Gastrocnemius medialis (tissue), 4 donors: ENCODE measurements at regions of chr16 and their contacts with region 1.

Region 1: GRCh38 chr16:22190776-22191531 is 15.1 kb upstream of the EEF2K start:
- DNase-seq: peak; percentile 100
- ATAC-seq: peak; percentile 64 to 65
- H3K4me3 ChIP-seq: peak overlapping the region; percentile 53 to 73 (median 62)
- H3K27ac ChIP-seq: peak overlapping the region; percentile 89 to 98 (median 97)
- H3K4me1 ChIP-seq: peaks cover 19 to 21% of the 10 kb centered on the region in 2 donors
- H3K27me3 ChIP-seq: no peaks in the 10 kb centered on the region
- CTCF ChIP-seq: no peak
- POLR2A ChIP-seq: peak; percentile 88 to 94

Region 2: GRCh38 chr16:20900299-20901067 is 1290.5 kb before region 1 on chr16 and contains the starts of genes DCUN1D3 and LYRM1:
- in situ Hi-C with region 1: loop called in 1 of 4 experiments (anchors 10 kb)
- intact Hi-C with region 1: loop called (anchors 5 kb)
- DNase-seq: peak; percentile 96 to 97
- ATAC-seq: peak; percentile 95 to 97
- H3K4me3 ChIP-seq: peak within 1 kb of the TSS; percentile 81 to 94 (median 86)
- H3K27ac ChIP-seq: peak within 1 kb of the TSS; percentile 93 to 97 (median 94)
- H3K4me1 ChIP-seq: peaks cover 24 to 62% of the 10 kb centered on the region in 2 donors
- H3K27me3 ChIP-seq: no peaks in the 10 kb centered on the region
- CTCF ChIP-seq: no peak
- POLR2A ChIP-seq: peak; percentile 69 to 77
- total RNA-seq, gene DCUN1D3: 7.6 to 10.5 (median 8.3) TPM
- total RNA-seq, gene LYRM1: 36.4 to 74.7 (median 38.8) TPM

Region 3: GRCh38 chr16:21952793-21953540 is 238.0 kb before region 1 on chr16 and contains the start of gene UQCRC2:
- in situ Hi-C with region 1: no loop called
- intact Hi-C with region 1: loop called (anchors 1 kb)
- DNase-seq: peak; percentile 86
- ATAC-seq: peak; percentile 98
- H3K4me3 ChIP-seq: peak within 1 kb of the TSS; percentile 73 to 99 (median 86)
- H3K27ac ChIP-seq: peak within 1 kb of the TSS; percentile 88 to 98 (median 96)
- H3K4me1 ChIP-seq: peaks cover 37 to 45% of the 10 kb centered on the region in 2 donors
- H3K27me3 ChIP-seq: no peaks in the 10 kb centered on the region
- CTCF ChIP-seq: peak in 1 of 5 experiments; percentile 18
- POLR2A ChIP-seq: peak; percentile 87 to 96
- total RNA-seq, gene UQCRC2: 204 to 335 (median 276) TPM

Region 4: GRCh38 chr16:22007509-22008214 is 183.3 kb before region 1 on chr16 and contains the start of gene MOSMO:
- in situ Hi-C with region 1: loop called in 2 of 4 experiments (anchors 10 kb)
- intact Hi-C with region 1: no loop called
- DNase-seq: peak; percentile 47 to 67
- ATAC-seq: peak; percentile 91 to 92
- H3K4me3 ChIP-seq: peak within 1 kb of the TSS; percentile 93 to 100 (median 98)
- H3K27ac ChIP-seq: peak within 1 kb of the TSS; percentile 85 to 88 (median 88)
- H3K4me1 ChIP-seq: peaks cover 20 to 30% of the 10 kb centered on the region in 2 donors
- H3K27me3 ChIP-seq: no peaks in the 10 kb centered on the region
- CTCF ChIP-seq: peak in 2 of 5 experiments; percentile 6 to 17
- POLR2A ChIP-seq: peak; percentile 64 to 82
- total RNA-seq, gene MOSMO: 12.6 to 17.6 (median 13.9) TPM

Region 5: GRCh38 chr16:22098405-22099255 is 92.3 kb before region 1 on chr16:
- in situ Hi-C with region 1: loop called in 1 of 4 experiments (anchors 10 kb)
- intact Hi-C with region 1: no loop called
- DNase-seq: no peak
- ATAC-seq: peak; percentile 61 to 77
- H3K4me3 ChIP-seq: no peak overlapping the region
- H3K27ac ChIP-seq: no peak overlapping the region
- H3K4me1 ChIP-seq: no peaks in the 10 kb centered on the region
- H3K27me3 ChIP-seq: no peaks in the 10 kb centered on the region
- CTCF ChIP-seq: peak in 3 of 5 experiments; percentile 21 to 60 (median 43)
- POLR2A ChIP-seq: no peak

Region 6: GRCh38 chr16:22217889-22218730 is 27.2 kb after region 1 on chr16:
- in situ Hi-C with region 1: no loop called
- intact Hi-C with region 1: loop called (anchors 2 kb)
- DNase-seq: peak in 1 of 2 donors; percentile 57
- ATAC-seq: peak in 1 of 2 donors; percentile 14
- H3K4me3 ChIP-seq: no peak overlapping the region
- H3K27ac ChIP-seq: peak overlapping the region; percentile 90 to 95 (median 94)
- H3K4me1 ChIP-seq: peaks cover 61 to 64% of the 10 kb centered on the region in 2 donors
- H3K27me3 ChIP-seq: no peaks in the 10 kb centered on the region
- CTCF ChIP-seq: no peak
- POLR2A ChIP-seq: peak in 1 of 2 donors; percentile 10

Region 7: GRCh38 chr16:22374311-22375116 is 183.6 kb after region 1 on chr16 and contains the start of gene CDR2:
- in situ Hi-C with region 1: no loop called
- intact Hi-C with region 1: loop called (anchors 10 kb)
- DNase-seq: peak; percentile 97
- ATAC-seq: peak; percentile 97
- H3K4me3 ChIP-seq: peak within 1 kb of the TSS; percentile 71 to 87 (median 78)
- H3K27ac ChIP-seq: peak within 1 kb of the TSS; percentile 63 to 76 (median 70)
- H3K4me1 ChIP-seq: peaks cover 21 to 25% of the 10 kb centered on the region in 2 donors
- H3K27me3 ChIP-seq: no peaks in the 10 kb centered on the region
- CTCF ChIP-seq: no peak
- POLR2A ChIP-seq: peak; percentile 70 to 88
- total RNA-seq, gene CDR2: 4.1 to 7.6 (median 7.3) TPM